CD14-positive monocyte (primary cell): ENCODE measurements at regions of chr17 and their contacts with region 1.

Region 1: DNA sequence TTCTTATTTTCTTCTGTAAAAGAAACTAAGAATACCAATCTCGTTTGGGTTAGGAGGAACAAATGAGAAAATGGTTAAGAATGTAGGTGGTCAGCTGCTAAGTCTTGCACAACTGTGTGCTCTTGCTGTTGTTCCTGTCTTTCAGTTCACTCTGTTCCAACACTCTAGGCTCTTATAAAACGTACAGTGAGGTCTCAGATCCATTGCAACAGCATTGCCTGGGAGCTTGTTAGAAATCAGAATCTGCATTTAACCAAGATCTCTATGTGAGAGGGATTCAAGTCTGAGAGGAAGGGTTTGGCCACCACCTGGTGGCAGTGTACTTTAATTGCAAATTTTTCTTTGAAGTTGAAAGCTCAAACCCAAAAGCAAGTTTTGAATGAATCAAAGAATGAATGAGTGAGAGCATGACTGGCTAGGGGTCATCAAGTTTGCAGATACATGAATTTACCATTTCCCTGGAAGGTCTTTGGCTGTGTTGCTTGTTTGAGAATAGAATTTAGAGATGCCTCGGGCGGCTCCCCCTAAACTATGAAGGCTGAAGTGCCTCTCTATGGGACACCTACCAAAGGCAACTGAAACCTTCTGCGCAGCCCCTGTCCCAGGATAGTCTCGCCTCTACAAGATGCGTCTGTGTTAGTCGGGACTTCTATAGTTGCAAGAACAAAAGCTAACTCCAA is 2.5 kb downstream of the ALOX15B start:
- DNase-seq: peak; percentile 64 to 85 (median 81)
- H3K4me3 ChIP-seq: peak overlapping the region in 1 of 3 experiments; percentile 54
- H3K4me3 Mint-ChIP-seq: peak overlapping the region in 1 of 2 donors; percentile 57
- H3K27ac ChIP-seq: peak overlapping the region; percentile 46 to 54
- H3K27ac Mint-ChIP-seq: peak overlapping the region; percentile 73 to 88 (median 87)
- H3K4me1 ChIP-seq: peaks cover 44 to 50% of the 10 kb centered on the region in 2 donors
- H3K4me1 Mint-ChIP-seq: peaks cover 53% of the 10 kb centered on the region
- H3K27me3 ChIP-seq: no peaks in the 10 kb centered on the region
- H3K27me3 Mint-ChIP-seq: peaks cover 3 to 5% (median 4%) of the 10 kb centered on the region in 3 donors
- CTCF ChIP-seq: peak; percentile 82

Region 2: GRCh38 chr17:7915611-7916382 is 125.6 kb before region 1 on chr17 and contains the start of gene RNF227:
- intact Hi-C with region 1: loop called in 1 of 2 experiments (anchors 5 kb)
- DNase-seq: peak; percentile 71 to 88 (median 79)
- H3K4me3 ChIP-seq: peak within 1 kb of the TSS; percentile 27 to 66 (median 34)
- H3K4me3 Mint-ChIP-seq: peak within 1 kb of the TSS; percentile 86 to 89
- H3K27ac ChIP-seq: peak within 1 kb of the TSS; percentile 81 to 87
- H3K27ac Mint-ChIP-seq: peak within 1 kb of the TSS; percentile 83 to 96 (median 94)
- H3K4me1 ChIP-seq: peaks cover 23 to 32% of the 10 kb centered on the region in 2 donors
- H3K4me1 Mint-ChIP-seq: peaks cover 39% of the 10 kb centered on the region
- H3K27me3 ChIP-seq: no peaks in the 10 kb centered on the region
- H3K27me3 Mint-ChIP-seq: peaks cover 0 to 3% (median 1%) of the 10 kb centered on the region in 3 donors
- CTCF ChIP-seq: no peak
- polyA plus RNA-seq, gene RNF227: 0.59 to 6.7 (median 1.3) TPM

Region 3: DNA sequence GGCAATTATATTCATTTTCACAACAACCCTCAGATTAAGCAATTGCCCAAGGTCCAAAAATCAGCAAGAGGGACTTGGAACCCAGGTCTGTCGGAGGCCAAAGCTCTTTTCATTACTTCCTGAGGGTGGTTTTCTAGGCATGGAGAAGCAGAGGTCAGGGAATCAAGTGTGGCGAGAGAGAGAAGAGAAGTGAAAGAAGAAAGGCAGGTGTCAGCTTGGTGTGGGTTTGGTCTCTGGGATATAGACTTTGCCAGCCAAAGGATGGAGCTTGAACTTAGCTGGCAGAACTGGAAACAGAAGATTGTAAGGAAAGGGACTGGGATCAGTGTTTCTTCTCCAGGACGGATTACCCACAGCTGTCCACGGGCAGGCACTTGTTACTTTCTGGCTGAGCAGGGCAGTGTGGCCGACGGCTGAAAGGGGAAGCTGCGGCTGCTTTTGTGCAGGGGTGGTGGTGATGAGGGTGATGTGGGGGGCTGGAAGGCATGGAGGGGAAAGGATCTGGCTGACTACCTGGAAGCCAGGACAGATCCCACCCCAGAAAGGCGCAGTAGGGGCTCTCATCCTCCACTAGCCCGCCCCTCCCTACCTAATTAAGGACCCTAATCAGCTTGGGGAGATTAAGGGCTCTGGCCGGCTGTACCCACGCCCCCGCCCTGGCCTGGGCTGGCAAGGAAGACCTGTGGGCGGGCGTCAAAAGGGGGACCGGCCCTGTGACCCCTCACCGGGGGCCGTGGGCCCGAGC is 39.2 kb before region 1 on chr17 and contains the start of gene GUCY2D:
- intact Hi-C with region 1: loop called in 1 of 2 experiments (anchors 5 kb)
- DNase-seq: peak in 2 of 3 donors; percentile 44 to 49
- H3K4me3 ChIP-seq: peak within 1 kb of the TSS; percentile 36 to 77 (median 73)
- H3K4me3 Mint-ChIP-seq: peak within 1 kb of the TSS; percentile 96 to 98
- H3K27ac ChIP-seq: peak within 1 kb of the TSS in 1 of 2 donors; percentile 27
- H3K27ac Mint-ChIP-seq: peak within 1 kb of the TSS; percentile 41 to 85 (median 63)
- H3K4me1 ChIP-seq: peaks cover 15 to 24% of the 10 kb centered on the region in 2 donors
- H3K4me1 Mint-ChIP-seq: peaks cover 31% of the 10 kb centered on the region
- H3K27me3 ChIP-seq: peaks cover 0 to 12% of the 10 kb centered on the region in 2 donors
- H3K27me3 Mint-ChIP-seq: peaks cover 15 to 20% (median 19%) of the 10 kb centered on the region in 3 donors
- CTCF ChIP-seq: no peak
- polyA plus RNA-seq, gene GUCY2D: 0.04 to 0.46 TPM in 2 of 3 donors, not detected in the other

Region 4: GRCh38 chr17:8016632-8017478 is 24.5 kb before region 1 on chr17:
- intact Hi-C with region 1: loop called in 1 of 2 experiments (anchors 2 kb)
- DNase-seq: peak; percentile 70 to 85 (median 77)
- H3K4me3 ChIP-seq: peak overlapping the region; percentile 36 to 75 (median 39)
- H3K4me3 Mint-ChIP-seq: peak overlapping the region; percentile 81 to 89
- H3K27ac ChIP-seq: peak overlapping the region; percentile 79 to 84
- H3K27ac Mint-ChIP-seq: peak overlapping the region; percentile 89 to 97 (median 93)
- H3K4me1 ChIP-seq: peaks cover 68 to 78% of the 10 kb centered on the region in 2 donors
- H3K4me1 Mint-ChIP-seq: peaks cover 73% of the 10 kb centered on the region
- H3K27me3 ChIP-seq: peaks cover 0 to 6% of the 10 kb centered on the region in 2 donors
- H3K27me3 Mint-ChIP-seq: peaks cover 0 to 9% (median 9%) of the 10 kb centered on the region in 3 donors
- CTCF ChIP-seq: peak; percentile 95